ENCODE measurements at regions of chr12 and their contacts with region 1.

Region 1: GRCh38 chr12:49662998-49663843 is 39.9 kb downstream of the PRPF40B start:
- DNase-seq: peak; percentile 90
- H3K4me3 Mint-ChIP-seq: peak overlapping the region; percentile 63
- H3K27ac Mint-ChIP-seq: peak overlapping the region; percentile 87
- H3K4me1 Mint-ChIP-seq: peaks cover 81% of the 10 kb centered on the region
- H3K27me3 Mint-ChIP-seq: no peaks in the 10 kb centered on the region

Region 2: DNA sequence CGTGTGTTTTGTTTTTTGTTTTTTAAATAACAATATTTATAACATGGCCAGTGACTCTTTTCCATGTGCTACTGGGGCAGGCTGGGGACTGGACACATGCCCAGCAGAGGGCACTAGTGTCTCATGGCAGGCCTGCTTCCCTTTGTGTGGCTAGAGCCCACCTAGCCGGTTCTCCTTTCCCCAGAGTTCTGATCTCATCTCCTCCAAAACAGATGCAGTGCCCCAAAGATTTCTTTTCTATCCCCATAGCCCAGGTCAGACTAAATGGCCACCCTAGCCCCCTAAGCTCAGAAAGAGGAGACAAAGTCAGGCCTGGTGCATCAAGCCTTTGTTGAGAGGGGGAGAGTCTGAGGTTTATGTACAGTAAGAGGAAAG is 18.6 kb before region 1 on chr12:
- CTCF ChIA-PET with region 1: interaction called, 23 read pairs
- intact Hi-C with region 1: loop called (anchors 1 kb)
- DNase-seq: peak; percentile 90
- H3K4me3 Mint-ChIP-seq: no peak overlapping the region
- H3K27ac Mint-ChIP-seq: peak overlapping the region; percentile 71
- H3K4me1 Mint-ChIP-seq: peaks cover 29% of the 10 kb centered on the region
- H3K27me3 Mint-ChIP-seq: no peaks in the 10 kb centered on the region

Region 3: GRCh38 chr12:49673446-49674317 is 10.5 kb after region 1 on chr12:
- CTCF ChIA-PET with region 1: interaction called, 6 read pairs
- intact Hi-C with region 1: loop called (anchors 1 kb)
- DNase-seq: no peak
- H3K4me3 Mint-ChIP-seq: no peak overlapping the region
- H3K27ac Mint-ChIP-seq: peak overlapping the region; percentile 98
- H3K4me1 Mint-ChIP-seq: peaks cover 85% of the 10 kb centered on the region
- H3K27me3 Mint-ChIP-seq: no peaks in the 10 kb centered on the region

Region 4: GRCh38 chr12:49698619-49699545 is 35.7 kb after region 1 on chr12:
- CTCF ChIA-PET with region 1: interaction called, 40 read pairs
- intact Hi-C with region 1: loop called (anchors 1 kb)
- DNase-seq: peak; percentile 68
- H3K4me3 Mint-ChIP-seq: peak overlapping the region; percentile 63
- H3K27ac Mint-ChIP-seq: peak overlapping the region; percentile 87
- H3K4me1 Mint-ChIP-seq: peaks cover 54% of the 10 kb centered on the region
- H3K27me3 Mint-ChIP-seq: no peaks in the 10 kb centered on the region

Region 5: GRCh38 chr12:49740930-49741881 is 78.0 kb after region 1 on chr12 and contains the start of gene TMBIM6:
- CTCF ChIA-PET with region 1: interaction called, 3 read pairs
- intact Hi-C with region 1: loop called (anchors 2 kb)
- DNase-seq: peak; percentile 99
- H3K4me3 Mint-ChIP-seq: peak within 1 kb of the TSS; percentile 100
- H3K27ac Mint-ChIP-seq: peak within 1 kb of the TSS; percentile 100
- H3K4me1 Mint-ChIP-seq: peaks cover 34% of the 10 kb centered on the region
- H3K27me3 Mint-ChIP-seq: no peaks in the 10 kb centered on the region
- total RNA-seq, gene TMBIM6: 466 to 498 TPM

Region 6: DNA sequence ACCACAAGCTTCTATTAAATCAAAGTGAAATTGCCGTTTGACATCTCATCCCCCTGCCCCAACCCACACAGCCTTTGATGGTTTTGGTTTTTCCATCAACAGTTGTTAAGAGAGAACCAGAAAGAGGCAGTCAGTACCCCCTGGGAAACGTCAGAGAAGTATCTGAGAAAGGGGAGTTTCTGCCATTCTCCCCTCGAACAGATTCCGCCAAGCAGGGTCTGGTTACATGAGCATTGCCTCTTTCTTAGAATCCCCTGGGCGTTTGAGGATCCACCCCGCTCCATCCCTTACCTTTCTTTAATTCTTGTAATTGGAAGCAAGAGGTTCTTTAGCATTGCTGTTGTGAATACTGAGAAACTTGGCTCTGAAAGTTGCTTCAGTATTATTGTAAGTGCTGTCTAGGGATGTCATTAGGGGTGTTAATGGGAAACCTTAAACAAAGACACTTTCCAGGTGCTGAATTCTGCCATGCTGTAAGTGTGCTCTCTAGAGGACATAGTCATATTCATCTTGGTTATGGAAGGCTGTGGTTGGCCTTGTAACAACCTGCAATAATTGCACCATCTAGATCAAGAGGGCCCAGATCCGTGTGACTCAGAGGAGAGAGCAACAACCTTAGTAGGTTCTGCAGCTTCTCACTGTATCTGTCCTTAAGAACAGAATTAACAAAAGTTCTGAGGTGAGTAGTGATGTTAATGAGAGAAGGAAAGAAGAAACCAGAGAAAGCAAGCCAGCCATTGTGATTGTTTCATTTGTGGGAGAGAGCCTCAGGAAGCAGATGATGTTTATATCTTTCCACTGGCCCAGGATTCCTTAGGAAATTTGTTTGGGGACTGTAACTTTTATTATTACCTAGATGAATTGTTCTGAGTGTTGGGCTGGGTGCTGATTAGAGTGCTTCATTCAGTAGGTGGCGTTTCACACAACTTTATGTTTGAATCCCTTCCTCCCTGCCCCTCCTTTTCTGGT is 87.1 kb after region 1 on chr12:
- CTCF ChIA-PET with region 1: no interaction called
- intact Hi-C with region 1: loop called (anchors 1 kb)
- DNase-seq: peak; percentile 87
- H3K4me3 Mint-ChIP-seq: peak overlapping the region; percentile 40
- H3K27ac Mint-ChIP-seq: peak overlapping the region; percentile 94
- H3K4me1 Mint-ChIP-seq: peaks cover 83% of the 10 kb centered on the region
- H3K27me3 Mint-ChIP-seq: no peaks in the 10 kb centered on the region

Region 7: DNA sequence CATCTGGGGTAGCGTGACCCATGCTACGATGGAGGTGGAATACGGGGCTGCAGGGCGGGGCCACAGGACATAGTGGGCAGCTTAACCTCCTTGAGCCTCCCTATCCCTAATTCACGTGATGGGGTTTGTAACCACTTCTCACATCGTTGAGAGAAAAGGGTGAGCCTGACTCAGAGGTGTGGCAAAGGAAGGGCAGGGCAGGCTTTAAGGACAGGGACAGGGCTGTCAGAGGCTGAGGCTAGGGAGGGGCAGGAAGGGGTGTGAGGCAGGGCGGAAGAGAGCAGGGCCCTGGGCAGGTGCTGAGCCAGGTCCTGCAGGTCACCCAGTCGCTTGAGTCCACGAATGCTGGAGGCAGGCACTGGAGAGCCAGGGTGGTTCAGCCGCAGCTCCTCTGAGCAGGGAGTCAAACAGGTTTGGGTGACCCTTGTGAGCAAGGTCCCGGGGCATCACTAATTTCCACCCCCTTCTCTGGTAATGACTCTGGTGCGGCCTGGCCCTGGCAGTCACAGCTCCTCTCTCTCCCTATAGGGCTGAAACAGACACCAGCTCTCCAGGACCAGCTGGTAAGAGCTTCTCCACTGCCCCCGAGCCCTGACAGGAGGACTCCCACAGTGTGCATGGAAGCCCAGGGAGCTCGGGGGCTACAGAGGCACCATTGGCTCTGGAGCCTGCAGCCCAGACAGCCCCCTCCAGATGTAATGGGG is 279.9 kb after region 1 on chr12:
- CTCF ChIA-PET with region 1: no interaction called
- intact Hi-C with region 1: no loop called
- DNase-seq: no peak
- H3K4me3 Mint-ChIP-seq: no peak overlapping the region
- H3K27ac Mint-ChIP-seq: no peak overlapping the region
- H3K4me1 Mint-ChIP-seq: peaks cover 16% of the 10 kb centered on the region
- H3K27me3 Mint-ChIP-seq: no peaks in the 10 kb centered on the region